Activated CD4-positive, alpha-beta memory T cell treated with anti-CD3 and anti-CD28 coated beads, Interleukin-2, amount 10 ng/mL, durations not matched to agents 7 days and 5 days (primary cell): ENCODE measurements at regions of chr4 and their contacts with region 1.

Region 1: GRCh38 chr4:184733654-184734524 is at the start of gene CENPU:
- DNase-seq: peak; percentile 96
- H3K4me3 Mint-ChIP-seq: peak within 1 kb of the TSS; percentile 100
- H3K27ac Mint-ChIP-seq: peak within 1 kb of the TSS; percentile 95
- H3K4me1 Mint-ChIP-seq: peaks cover 38% of the 10 kb centered on the region
- H3K27me3 Mint-ChIP-seq: no peaks in the 10 kb centered on the region
- total RNA-seq, gene CENPU: 69.6 to 69.7 TPM

Region 2: DNA sequence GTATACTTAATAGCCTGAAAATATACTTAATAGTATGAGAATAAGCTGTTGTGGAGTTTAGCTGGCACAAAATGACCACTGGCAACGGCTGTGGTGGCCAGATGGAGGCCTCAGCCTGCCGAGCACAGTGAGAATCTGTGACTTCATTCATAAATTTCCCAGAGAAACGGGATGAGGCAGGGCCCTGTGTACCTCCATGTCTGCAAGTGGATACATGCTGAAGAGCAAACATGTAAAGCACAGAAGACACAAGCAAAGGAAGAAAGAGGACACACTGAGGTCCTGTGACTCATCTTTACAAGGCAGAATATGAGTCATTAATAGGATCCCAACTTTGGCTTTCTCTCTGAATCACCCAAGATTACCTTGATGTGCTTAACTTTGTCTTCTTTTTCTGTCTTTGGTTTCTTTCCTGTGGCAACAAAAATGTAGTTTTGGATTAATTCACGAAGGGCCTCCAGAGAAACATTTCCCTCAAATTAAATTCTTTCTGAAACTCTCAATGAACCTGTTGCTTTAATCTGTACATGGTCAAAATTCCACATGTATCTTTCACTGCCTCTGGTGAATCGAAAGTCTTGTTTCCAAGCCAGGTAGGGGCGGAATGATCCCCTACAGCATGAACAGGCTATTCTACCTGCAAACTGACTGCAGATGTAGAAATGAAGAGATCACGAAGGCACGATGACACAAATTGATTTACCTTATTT is 315.9 kb before region 1 on chr4:
- CTCF ChIA-PET with region 1: no interaction called
- POLR2A ChIA-PET with region 1: interaction called, 14 read pairs
- DNase-seq: peak; percentile 36
- H3K4me3 Mint-ChIP-seq: peak overlapping the region; percentile 77
- H3K27ac Mint-ChIP-seq: peak overlapping the region; percentile 98
- H3K4me1 Mint-ChIP-seq: peaks cover 92% of the 10 kb centered on the region
- H3K27me3 Mint-ChIP-seq: no peaks in the 10 kb centered on the region

Region 3: DNA sequence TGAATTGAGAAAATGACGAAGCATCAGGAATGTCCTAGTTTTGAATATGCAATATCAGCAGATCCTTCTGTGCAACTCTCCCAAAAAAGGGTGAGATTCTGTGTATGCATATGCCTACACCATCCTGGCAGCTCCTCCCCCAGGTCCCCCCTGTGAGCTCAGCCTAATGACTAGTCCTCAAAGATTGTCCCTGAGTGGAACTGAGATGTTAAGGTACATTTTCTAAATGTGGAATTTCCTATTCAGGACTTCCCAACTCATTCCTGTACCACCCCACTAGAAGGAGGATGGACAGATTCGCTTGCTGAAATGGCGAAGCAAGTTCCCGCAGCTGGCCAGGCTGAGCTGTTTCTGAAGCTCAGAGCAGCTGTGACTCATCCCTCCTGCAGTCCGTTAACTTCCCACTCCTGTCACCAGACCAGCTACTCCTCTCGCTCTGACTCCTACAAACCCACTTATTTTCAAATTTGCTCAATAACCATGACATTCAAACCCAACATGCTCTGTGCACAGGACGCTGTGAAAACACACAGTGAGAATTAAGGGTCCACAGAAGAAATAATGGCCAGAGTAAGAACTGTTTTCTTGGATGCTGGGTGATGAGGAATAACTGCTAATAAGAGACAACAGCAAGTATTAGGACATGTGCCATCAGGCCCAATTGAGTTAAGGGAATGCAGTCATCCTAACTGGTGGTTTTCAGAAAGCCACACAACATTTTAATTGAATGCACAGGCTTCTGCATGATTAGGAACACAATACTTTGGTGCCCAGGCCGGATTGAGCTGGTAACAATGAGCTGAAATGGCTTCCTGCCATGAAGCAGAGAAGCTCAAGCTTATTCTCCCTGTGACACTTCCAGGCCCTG is 219.5 kb before region 1 on chr4:
- CTCF ChIA-PET with region 1: interaction called, 5 read pairs
- POLR2A ChIA-PET with region 1: interaction called, 10 read pairs
- DNase-seq: peak; percentile 71
- H3K4me3 Mint-ChIP-seq: peak overlapping the region; percentile 32
- H3K27ac Mint-ChIP-seq: peak overlapping the region; percentile 89
- H3K4me1 Mint-ChIP-seq: peaks cover 47% of the 10 kb centered on the region
- H3K27me3 Mint-ChIP-seq: no peaks in the 10 kb centered on the region

Region 4: GRCh38 chr4:184664448-184665210 is 69.3 kb before region 1 on chr4:
- CTCF ChIA-PET with region 1: interaction called, 3 read pairs
- POLR2A ChIA-PET with region 1: interaction called, 31 read pairs
- DNase-seq: no peak
- H3K4me3 Mint-ChIP-seq: no peak overlapping the region
- H3K27ac Mint-ChIP-seq: no peak overlapping the region
- H3K4me1 Mint-ChIP-seq: peaks cover 30% of the 10 kb centered on the region
- H3K27me3 Mint-ChIP-seq: no peaks in the 10 kb centered on the region

Region 5: GRCh38 chr4:184705692-184706091 is 28.2 kb before region 1 on chr4:
- CTCF ChIA-PET with region 1: interaction called, 6 read pairs
- POLR2A ChIA-PET with region 1: interaction called, 23 read pairs
- DNase-seq: no peak
- H3K4me3 Mint-ChIP-seq: peak overlapping the region; percentile 37
- H3K27ac Mint-ChIP-seq: peak overlapping the region; percentile 88
- H3K4me1 Mint-ChIP-seq: peaks cover 32% of the 10 kb centered on the region
- H3K27me3 Mint-ChIP-seq: no peaks in the 10 kb centered on the region

Region 6: DNA sequence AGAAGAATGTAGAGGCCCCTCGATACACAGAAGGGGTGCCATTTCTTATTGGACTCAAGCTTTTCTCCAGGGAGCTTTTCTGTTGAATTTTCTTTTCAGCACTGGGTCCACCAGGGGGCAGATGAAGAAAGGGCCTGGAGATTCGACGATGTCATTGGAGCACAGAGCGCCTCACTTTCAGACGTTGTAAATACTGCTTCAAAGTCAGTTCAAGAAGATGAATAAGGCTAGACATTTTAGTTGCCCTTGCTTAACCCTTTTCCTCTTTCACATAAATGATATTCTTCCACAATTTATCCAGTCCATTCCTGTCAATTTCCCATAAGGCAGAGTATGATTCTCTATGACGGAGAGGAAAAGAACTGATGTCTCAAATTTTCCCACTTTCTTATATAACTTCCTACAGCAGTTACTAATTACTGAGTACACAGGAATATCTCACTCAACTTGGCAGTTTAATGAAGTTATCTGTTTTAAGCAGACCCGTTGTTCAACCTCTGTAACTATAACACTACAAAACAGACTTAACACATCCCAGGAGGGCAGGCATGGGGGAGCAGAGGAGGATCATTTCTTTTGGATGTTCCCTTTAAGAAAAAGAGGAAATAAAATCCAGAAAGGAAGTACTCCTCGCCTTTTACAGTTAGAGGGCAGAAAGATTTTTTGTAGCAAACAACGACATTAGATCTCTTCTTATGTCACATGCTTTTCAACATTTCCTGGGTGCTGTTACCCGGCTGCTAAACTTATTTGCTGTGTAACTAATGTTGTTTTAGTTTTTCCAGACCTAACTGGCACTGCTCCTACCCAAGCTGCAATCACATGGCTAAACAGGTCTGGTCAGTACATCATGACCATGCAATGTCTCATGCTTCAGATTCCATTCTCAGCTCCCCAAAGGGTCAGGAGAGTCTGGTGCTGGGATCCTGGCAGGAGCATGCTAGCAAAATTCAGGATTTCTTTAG is 12.2 kb after region 1 on chr4:
- CTCF ChIA-PET with region 1: interaction called, 9 read pairs
- POLR2A ChIA-PET with region 1: interaction called, 16 read pairs
- DNase-seq: peak; percentile 71
- H3K4me3 Mint-ChIP-seq: no peak overlapping the region
- H3K27ac Mint-ChIP-seq: no peak overlapping the region
- H3K4me1 Mint-ChIP-seq: peaks cover 5% of the 10 kb centered on the region
- H3K27me3 Mint-ChIP-seq: no peaks in the 10 kb centered on the region

Region 7: DNA sequence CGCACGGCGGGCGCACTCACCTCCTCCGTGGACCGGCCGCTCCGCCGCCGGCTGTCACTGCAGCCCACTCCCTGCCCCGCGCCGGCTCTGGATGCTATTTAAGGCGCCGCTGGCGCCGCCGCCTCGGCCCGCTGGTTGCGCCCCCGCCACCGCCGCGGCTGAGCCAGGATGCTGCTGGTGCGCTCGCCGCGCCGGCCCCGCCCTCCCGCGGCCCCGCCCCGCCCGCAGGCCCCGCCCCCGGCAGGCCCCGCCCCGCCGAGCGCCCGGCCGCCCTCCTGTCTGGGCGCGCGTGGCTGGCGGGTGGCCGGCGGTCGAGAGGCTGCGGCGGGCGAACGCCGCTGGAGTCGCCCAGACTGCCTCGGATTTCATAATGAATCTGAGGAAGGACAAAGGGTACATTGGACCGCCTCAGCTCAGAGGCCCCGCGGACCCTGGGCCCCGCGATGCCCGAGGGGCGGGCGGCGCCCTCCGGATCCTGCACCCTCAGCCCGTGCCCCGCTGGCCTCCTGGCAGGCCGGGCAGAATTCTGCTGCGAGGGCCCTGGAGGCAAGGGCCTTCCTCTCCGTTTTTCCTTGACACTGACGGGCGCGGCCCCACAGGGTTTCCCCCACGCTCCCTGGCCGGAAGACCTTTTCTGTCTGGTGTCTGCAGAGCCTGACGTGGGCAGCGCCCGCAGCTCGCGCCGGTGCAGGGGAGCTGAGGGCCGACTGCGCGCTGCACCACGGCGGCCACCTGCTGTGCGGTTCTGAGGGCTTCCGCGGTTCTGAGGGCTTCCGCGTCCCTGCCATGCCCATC is 92.2 kb after region 1 on chr4 and contains the start of gene ACSL1:
- CTCF ChIA-PET with region 1: interaction called, 4 read pairs
- POLR2A ChIA-PET with region 1: interaction called, 21 read pairs
- DNase-seq: peak; percentile 79
- H3K4me3 Mint-ChIP-seq: peak within 1 kb of the TSS; percentile 86
- H3K27ac Mint-ChIP-seq: peak within 1 kb of the TSS; percentile 69
- H3K4me1 Mint-ChIP-seq: peaks cover 35% of the 10 kb centered on the region
- H3K27me3 Mint-ChIP-seq: peaks cover 13% of the 10 kb centered on the region
- total RNA-seq, gene ACSL1: 16.0 to 16.1 TPM